Natural killer cell (primary cell): ENCODE measurements at regions of chr7 and their contacts with region 1.

Region 1: GRCh38 chr7:50335795-50336754 is 31.6 kb downstream of the IKZF1 start:
- DNase-seq: peak; percentile 74 to 87
- ATAC-seq: peak; percentile 74 to 82 (median 74)
- H3K4me3 ChIP-seq: no peak overlapping the region
- H3K4me3 Mint-ChIP-seq: no peak overlapping the region
- H3K27ac ChIP-seq: peak overlapping the region; percentile 91
- H3K27ac Mint-ChIP-seq: no peak overlapping the region
- H3K4me1 ChIP-seq: peaks cover 92% of the 10 kb centered on the region
- H3K4me1 Mint-ChIP-seq: peaks cover 19 to 39% of the 10 kb centered on the region in 2 donors
- H3K27me3 ChIP-seq: no peaks in the 10 kb centered on the region
- H3K27me3 Mint-ChIP-seq: no peaks in the 10 kb centered on the region
- CTCF ChIP-seq: no peak

Region 2: GRCh38 chr7:50266635-50267386 is 69.3 kb before region 1 on chr7:
- intact Hi-C with region 1: loop called (anchors 1 kb)
- DNase-seq: peak; percentile 48 to 84
- ATAC-seq: peak; percentile 48 to 72 (median 70)
- H3K4me3 ChIP-seq: no peak overlapping the region
- H3K4me3 Mint-ChIP-seq: peak overlapping the region; percentile 94
- H3K27ac ChIP-seq: peak overlapping the region; percentile 71
- H3K27ac Mint-ChIP-seq: peak overlapping the region; percentile 89 to 97
- H3K4me1 ChIP-seq: peaks cover 79% of the 10 kb centered on the region
- H3K4me1 Mint-ChIP-seq: peaks cover 83 to 85% of the 10 kb centered on the region in 2 donors
- H3K27me3 ChIP-seq: no peaks in the 10 kb centered on the region
- H3K27me3 Mint-ChIP-seq: no peaks in the 10 kb centered on the region
- CTCF ChIP-seq: no peak

Region 3: DNA sequence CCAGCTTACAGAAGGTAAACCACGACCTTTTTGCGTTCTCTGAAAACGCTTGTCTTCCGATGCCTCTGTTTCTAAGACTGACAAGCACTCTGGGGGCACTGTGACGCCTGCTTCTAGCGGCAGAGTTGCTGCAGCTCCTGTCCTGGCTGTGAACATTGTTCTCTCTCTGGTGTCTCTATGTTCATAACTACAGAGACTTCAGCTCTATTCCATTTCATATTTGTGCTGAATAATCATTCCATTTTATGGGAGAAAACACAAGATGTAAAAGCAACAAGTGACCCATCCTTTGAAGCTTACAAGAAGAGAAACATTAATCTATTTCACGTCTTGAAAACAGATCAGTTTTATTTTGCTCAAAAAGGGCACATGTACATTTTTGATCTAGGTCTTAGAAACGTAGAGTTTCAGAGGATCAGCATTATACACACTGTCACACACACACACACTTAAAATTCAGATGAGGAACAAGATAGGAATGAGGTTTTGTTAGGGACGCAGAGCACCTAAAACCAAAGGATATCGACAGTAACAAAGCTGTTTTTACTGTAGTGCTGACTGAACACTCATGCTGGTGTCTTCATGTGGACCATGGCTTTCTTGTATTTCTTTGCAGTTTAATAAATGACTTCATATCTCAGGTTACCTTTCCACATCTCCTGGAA is 28.6 kb before region 1 on chr7:
- intact Hi-C with region 1: loop called (anchors 2 kb)
- DNase-seq: peak; percentile 48 to 87
- ATAC-seq: peak; percentile 39 to 63 (median 54)
- H3K4me3 ChIP-seq: peak overlapping the region; percentile 96
- H3K4me3 Mint-ChIP-seq: peak overlapping the region; percentile 99
- H3K27ac ChIP-seq: peak overlapping the region; percentile 93
- H3K27ac Mint-ChIP-seq: peak overlapping the region in 1 of 2 donors; percentile 98
- H3K4me1 ChIP-seq: peaks cover 33% of the 10 kb centered on the region
- H3K4me1 Mint-ChIP-seq: peaks cover 66 to 75% of the 10 kb centered on the region in 2 donors
- H3K27me3 ChIP-seq: no peaks in the 10 kb centered on the region
- H3K27me3 Mint-ChIP-seq: no peaks in the 10 kb centered on the region
- CTCF ChIP-seq: no peak

Region 4: DNA sequence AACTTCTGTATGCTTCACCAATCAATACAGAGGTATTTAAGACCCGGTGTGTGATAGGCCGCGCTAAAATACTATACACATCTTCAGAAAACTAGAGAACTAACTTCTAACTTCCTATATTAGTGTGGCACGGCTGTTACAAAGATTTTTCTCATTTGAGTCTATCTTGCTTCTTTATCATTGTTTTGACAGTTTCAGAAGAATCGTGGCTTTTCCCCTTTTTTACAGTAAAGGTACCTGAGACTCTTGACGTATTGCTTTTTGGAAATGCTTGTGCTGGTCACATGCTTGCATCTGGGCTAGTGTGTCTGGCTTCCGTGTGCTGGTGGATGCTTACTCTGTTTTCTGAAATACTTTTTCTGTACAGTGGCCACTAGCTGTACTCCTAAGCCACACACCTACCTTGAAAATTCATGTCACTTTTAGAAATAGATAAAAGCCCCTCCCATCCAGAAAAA is 18.8 kb before region 1 on chr7:
- intact Hi-C with region 1: loop called (anchors 2 kb)
- DNase-seq: peak in 1 of 2 donors; percentile 92
- ATAC-seq: peak; percentile 67 to 77 (median 76)
- H3K4me3 ChIP-seq: no peak overlapping the region
- H3K4me3 Mint-ChIP-seq: peak overlapping the region; percentile 93
- H3K27ac ChIP-seq: peak overlapping the region; percentile 93
- H3K27ac Mint-ChIP-seq: peak overlapping the region in 1 of 2 donors; percentile 98
- H3K4me1 ChIP-seq: peaks cover 65% of the 10 kb centered on the region
- H3K4me1 Mint-ChIP-seq: peaks cover 96 to 97% of the 10 kb centered on the region in 2 donors
- H3K27me3 ChIP-seq: no peaks in the 10 kb centered on the region
- H3K27me3 Mint-ChIP-seq: no peaks in the 10 kb centered on the region
- CTCF ChIP-seq: no peak

Region 5: GRCh38 chr7:50349963-50350944 is 14.2 kb after region 1 on chr7:
- intact Hi-C with region 1: loop called (anchors 2 kb)
- DNase-seq: peak; percentile 65 to 79
- ATAC-seq: peak; percentile 58 to 78 (median 70)
- H3K4me3 ChIP-seq: no peak overlapping the region
- H3K4me3 Mint-ChIP-seq: peak overlapping the region; percentile 80
- H3K27ac ChIP-seq: peak overlapping the region; percentile 95
- H3K27ac Mint-ChIP-seq: no peak overlapping the region
- H3K4me1 ChIP-seq: peaks cover 79% of the 10 kb centered on the region
- H3K4me1 Mint-ChIP-seq: peaks cover 94 to 98% of the 10 kb centered on the region in 2 donors
- H3K27me3 ChIP-seq: no peaks in the 10 kb centered on the region
- H3K27me3 Mint-ChIP-seq: no peaks in the 10 kb centered on the region
- CTCF ChIP-seq: no peak